Thyroid gland (tissue), 4 donors: ENCODE measurements at regions of chr1 and their contacts with region 1.

Region 1: GRCh38 chr1:42766741-42767509 is at the starts of genes C1orf50 and P3H1:
- DNase-seq: peak; percentile 100
- H3K4me3 ChIP-seq: peak within 1 kb of the TSS; percentile 93 to 100 (median 97)
- H3K27ac ChIP-seq: peak within 1 kb of the TSS; percentile 69 to 79 (median 76)
- H3K4me1 ChIP-seq: peaks cover 10 to 23% of the 10 kb centered on the region in 2 donors
- H3K27me3 ChIP-seq: no peaks in the 10 kb centered on the region
- CTCF ChIP-seq: no peak
- POLR2A ChIP-seq: peak; percentile 80 to 98
- total RNA-seq, gene C1orf50: 4.2 to 7.2 (median 4.7) TPM
- total RNA-seq, gene P3H1: 16.6 to 28.0 (median 24.2) TPM

Region 2: GRCh38 chr1:42657971-42658879 is 108.7 kb before region 1 on chr1 and contains the start of gene PPIH:
- intact Hi-C with region 1: no loop called
- DNase-seq: peak; percentile 96
- H3K4me3 ChIP-seq: peak within 1 kb of the TSS; percentile 62 to 81 (median 79)
- H3K27ac ChIP-seq: peak within 1 kb of the TSS; percentile 47 to 68 (median 64)
- H3K4me1 ChIP-seq: peaks cover 11 to 12% of the 10 kb centered on the region in 2 donors
- H3K27me3 ChIP-seq: no peaks in the 10 kb centered on the region
- CTCF ChIP-seq: peak in 5 of 6 experiments; percentile 11 to 59 (median 56)
- POLR2A ChIP-seq: peak in 1 of 2 donors; percentile 66
- total RNA-seq, gene PPIH: 26.4 to 45.9 (median 40.3) TPM

Region 3: DNA sequence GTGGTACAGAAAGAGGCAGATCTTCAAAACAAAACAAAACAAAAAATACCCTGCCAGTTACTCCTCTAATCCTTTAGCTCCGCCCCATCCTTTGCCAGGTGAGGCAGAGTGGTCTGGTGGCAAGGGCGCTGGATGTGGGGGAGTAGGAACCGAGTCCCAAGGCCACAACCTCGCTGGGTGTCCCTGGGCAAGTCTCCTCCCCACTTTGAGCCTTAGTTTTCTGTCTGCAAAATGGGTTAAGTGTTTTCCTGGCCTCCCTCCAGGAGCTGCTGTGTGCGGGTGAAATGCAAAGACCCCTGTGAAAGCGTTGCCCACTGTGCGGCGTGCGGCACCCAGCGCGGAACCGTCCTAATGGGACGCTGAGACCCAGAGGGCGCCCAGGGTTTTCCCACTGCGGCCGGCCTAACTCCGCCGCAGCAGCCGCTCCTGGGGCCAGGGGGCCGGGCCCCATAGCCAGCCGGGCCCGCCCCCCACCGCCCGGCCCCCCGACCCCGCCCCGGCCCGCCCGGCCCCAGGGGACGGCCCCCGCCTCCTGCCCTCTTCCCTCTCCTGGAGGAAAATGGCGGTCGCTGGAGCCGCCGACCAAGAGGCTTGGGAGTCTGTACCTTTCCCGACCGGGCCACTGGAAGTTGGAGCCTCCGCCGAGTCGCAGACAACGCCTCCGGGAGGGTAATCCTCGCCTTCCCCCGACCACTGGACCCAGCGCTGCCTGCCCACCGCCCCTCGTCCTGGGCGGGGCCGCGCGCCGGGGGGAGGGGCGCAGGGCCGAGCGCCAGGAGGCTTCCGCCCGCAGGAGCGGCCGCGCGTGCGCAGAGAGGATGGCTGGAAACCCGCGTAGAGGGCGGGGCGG is 49.9 kb after region 1 on chr1 and contains the starts of genes ERMAP and SVBP:
- intact Hi-C with region 1: loop called (anchors 5 kb)
- DNase-seq: peak; percentile 90 to 91
- H3K4me3 ChIP-seq: peak within 1 kb of the TSS; percentile 37 to 93 (median 43)
- H3K27ac ChIP-seq: peak within 1 kb of the TSS; percentile 91 to 100 (median 97)
- H3K4me1 ChIP-seq: peaks cover 10 to 13% of the 10 kb centered on the region in 2 donors
- H3K27me3 ChIP-seq: no peaks in the 10 kb centered on the region
- CTCF ChIP-seq: no peak
- POLR2A ChIP-seq: peak in 1 of 2 donors; percentile 60
- total RNA-seq, gene ERMAP: 23.7 to 36.5 (median 28.9) TPM
- total RNA-seq, gene SVBP: 20.4 to 29.0 (median 21.6) TPM

Region 4: GRCh38 chr1:42852613-42852990 is 85.7 kb after region 1 on chr1:
- intact Hi-C with region 1: no loop called
- DNase-seq: no peak
- H3K4me3 ChIP-seq: no peak overlapping the region
- H3K27ac ChIP-seq: no peak overlapping the region
- H3K4me1 ChIP-seq: peaks cover 1 to 6% of the 10 kb centered on the region in 2 donors
- H3K27me3 ChIP-seq: no peaks in the 10 kb centered on the region
- CTCF ChIP-seq: no peak
- POLR2A ChIP-seq: no peak